ENCODE measurements at regions of chr1 and their contacts with region 1.

Region 1: GRCh38 chr1:203526572-203526971 is 32.6 kb downstream of the OPTC start:
- DNase-seq: no peak
- H3K4me3 ChIP-seq: no peak overlapping the region
- H3K27ac ChIP-seq: no peak overlapping the region
- H3K4me1 ChIP-seq: peaks cover 7 to 21% (median 18%) of the 10 kb centered on the region in 4 experiments
- H3K27me3 ChIP-seq: peaks cover 0 to 5% (median 4%) of the 10 kb centered on the region in 4 experiments; a peak in 3 of 7 replicates
- CTCF ChIP-seq: no peak
- EP300 ChIP-seq: no peak
- POLR2A ChIP-seq: no peak
- RAD21 ChIP-seq: no peak

Region 2: DNA sequence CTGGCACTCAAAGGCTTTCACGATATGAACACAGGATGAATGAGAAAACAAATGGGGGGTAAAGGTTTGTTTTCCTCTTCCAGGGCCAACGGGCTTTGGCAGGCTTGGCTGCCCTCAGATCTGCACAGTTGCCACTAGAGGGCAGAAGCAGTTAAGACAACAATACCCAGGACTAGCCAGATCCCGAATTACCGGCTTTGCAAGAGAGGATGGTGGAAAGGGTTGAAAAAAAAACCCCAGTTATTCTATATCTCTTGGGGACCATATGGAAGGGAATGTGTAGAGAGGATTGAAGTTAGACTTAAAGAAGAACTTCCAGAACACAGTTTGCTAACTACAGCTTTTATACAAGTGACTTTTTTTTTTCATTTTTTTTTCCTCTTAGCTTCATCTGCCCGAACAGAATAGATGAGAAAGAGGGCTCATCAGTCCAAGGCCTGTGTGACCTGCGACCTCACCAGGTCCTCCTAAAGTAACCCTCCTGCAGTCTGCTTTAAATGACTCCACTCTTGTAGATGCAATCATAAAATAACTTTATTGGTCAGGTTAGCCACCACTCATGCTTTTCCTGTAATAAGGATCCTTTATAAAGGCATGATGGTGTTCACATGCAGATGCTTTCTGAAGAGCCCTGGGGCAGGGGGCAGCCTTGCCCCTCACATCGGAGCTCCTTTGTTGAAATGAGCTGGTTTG is 186.3 kb before region 1 on chr1:
- CTCF ChIA-PET with region 1: no interaction called
- POLR2A ChIA-PET with region 1: no interaction called
- DNase-seq: no peak
- H3K4me3 ChIP-seq: no peak overlapping the region
- H3K27ac ChIP-seq: 0 out of 2 replicates have a peak overlapping the region, but pooled peaks have one; percentile 13
- H3K4me1 ChIP-seq: peaks cover 2 to 4% (median 3%) of the 10 kb centered on the region in 4 experiments; a peak in 5 of 7 replicates
- H3K27me3 ChIP-seq: peaks cover 0 to 3% (median 0%) of the 10 kb centered on the region in 4 experiments; a peak in 2 of 7 replicates
- CTCF ChIP-seq: peak; percentile 78 to 96 (median 88)
- EP300 ChIP-seq: no peak
- POLR2A ChIP-seq: no peak
- RAD21 ChIP-seq: peak; percentile 95 to 96

Region 3: GRCh38 chr1:203549309-203549708 is 22.7 kb after region 1 on chr1:
- CTCF ChIA-PET with region 1: interaction called, 13 read pairs
- POLR2A ChIA-PET with region 1: interaction called, 3 read pairs
- DNase-seq: peak in 1 of 2 experiments; percentile 59
- H3K4me3 ChIP-seq: peak overlapping the region in 1 of 4 experiments; percentile 25; a peak in 1 of 8 replicates
- H3K27ac ChIP-seq: no peak overlapping the region
- H3K4me1 ChIP-seq: peaks cover 2 to 21% (median 16%) of the 10 kb centered on the region in 4 experiments; a peak in 6 of 7 replicates
- H3K27me3 ChIP-seq: no peaks in the 10 kb centered on the region
- CTCF ChIP-seq: no peak
- EP300 ChIP-seq: peak in 1 of 2 experiments; percentile 63; a peak in 1 of 3 replicates
- POLR2A ChIP-seq: no peak
- RAD21 ChIP-seq: no peak; a peak in 1 of 4 replicates

Region 4: DNA sequence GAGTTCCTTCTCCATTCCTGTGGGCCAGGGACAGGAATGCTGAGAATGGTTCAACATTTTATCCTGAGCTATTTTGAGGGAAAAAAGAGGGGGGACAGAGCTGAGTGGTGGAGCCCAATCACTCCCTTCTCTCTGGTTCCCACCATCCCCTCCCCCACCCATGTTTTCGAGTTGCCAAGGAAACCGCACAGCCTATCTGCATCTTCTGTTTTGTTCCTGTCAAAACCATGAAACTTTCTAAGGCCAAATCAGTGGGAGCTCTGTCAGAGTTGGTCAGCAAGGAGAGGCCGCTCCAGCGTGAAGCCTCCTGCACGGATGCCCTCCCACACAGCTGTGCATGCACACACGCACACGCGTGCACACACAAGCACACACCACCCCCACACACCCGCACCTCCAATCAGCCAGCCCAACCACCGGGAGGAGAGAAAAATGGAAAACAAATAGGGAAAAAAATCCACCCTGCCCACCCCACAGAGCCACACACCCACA is 45.6 kb after region 1 on chr1:
- CTCF ChIA-PET with region 1: interaction called, 16 read pairs
- POLR2A ChIA-PET with region 1: no interaction called
- DNase-seq: peak in 1 of 2 experiments; percentile 60
- H3K4me3 ChIP-seq: no peak overlapping the region
- H3K27ac ChIP-seq: 0 out of 2 replicates have a peak overlapping the region, but pooled peaks have one; percentile 18
- H3K4me1 ChIP-seq: peaks cover 0 to 9% (median 4%) of the 10 kb centered on the region in 4 experiments; a peak in 6 of 7 replicates
- H3K27me3 ChIP-seq: no peaks in the 10 kb centered on the region
- CTCF ChIP-seq: no peak
- EP300 ChIP-seq: peak in 1 of 2 experiments; percentile 18; a peak in 1 of 3 replicates
- POLR2A ChIP-seq: no peak
- RAD21 ChIP-seq: no peak

Measured in H1 (cell line).